CD4-positive, alpha-beta T cell (primary cell): ENCODE measurements at regions of chr2 and their contacts with region 1.

Region 1: GRCh38 chr2:24360050-24360962 is at the start of gene ITSN2:
- DNase-seq: peak; percentile 65 to 94 (median 75)
- ATAC-seq: peak; percentile 81
- H3K4me3 ChIP-seq: peak within 1 kb of the TSS; percentile 83
- H3K4me3 Mint-ChIP-seq: peak within 1 kb of the TSS; percentile 99
- H3K27ac ChIP-seq: peak within 1 kb of the TSS; percentile 83 to 93
- H3K27ac Mint-ChIP-seq: peak within 1 kb of the TSS; percentile 97
- H3K4me1 ChIP-seq: peaks cover 13% of the 10 kb centered on the region
- H3K4me1 Mint-ChIP-seq: peaks cover 40% of the 10 kb centered on the region
- H3K27me3 ChIP-seq: no peaks in the 10 kb centered on the region
- H3K27me3 Mint-ChIP-seq: no peaks in the 10 kb centered on the region
- CTCF ChIP-seq: no peak
- total RNA-seq, gene ITSN2: 75.4 to 77.1 TPM

Region 2: GRCh38 chr2:23939987-23940717 is 420.2 kb before region 1 on chr2 and contains the start of gene UBXN2A:
- CTCF ChIA-PET with region 1: no interaction called
- POLR2A ChIA-PET with region 1: no interaction called
- intact Hi-C with region 1: loop called in 1 of 2 experiments (anchors 5 kb)
- DNase-seq: peak; percentile 54 to 93 (median 66)
- ATAC-seq: peak; percentile 86
- H3K4me3 ChIP-seq: peak within 1 kb of the TSS; percentile 88
- H3K4me3 Mint-ChIP-seq: peak within 1 kb of the TSS; percentile 94
- H3K27ac ChIP-seq: peak within 1 kb of the TSS in 1 of 2 donors; percentile 15
- H3K27ac Mint-ChIP-seq: peak within 1 kb of the TSS; percentile 76
- H3K4me1 ChIP-seq: peaks cover 19% of the 10 kb centered on the region
- H3K4me1 Mint-ChIP-seq: peaks cover 30% of the 10 kb centered on the region
- H3K27me3 ChIP-seq: no peaks in the 10 kb centered on the region
- H3K27me3 Mint-ChIP-seq: no peaks in the 10 kb centered on the region
- CTCF ChIP-seq: no peak
- total RNA-seq, gene UBXN2A: 12.9 to 16.7 TPM

Region 3: DNA sequence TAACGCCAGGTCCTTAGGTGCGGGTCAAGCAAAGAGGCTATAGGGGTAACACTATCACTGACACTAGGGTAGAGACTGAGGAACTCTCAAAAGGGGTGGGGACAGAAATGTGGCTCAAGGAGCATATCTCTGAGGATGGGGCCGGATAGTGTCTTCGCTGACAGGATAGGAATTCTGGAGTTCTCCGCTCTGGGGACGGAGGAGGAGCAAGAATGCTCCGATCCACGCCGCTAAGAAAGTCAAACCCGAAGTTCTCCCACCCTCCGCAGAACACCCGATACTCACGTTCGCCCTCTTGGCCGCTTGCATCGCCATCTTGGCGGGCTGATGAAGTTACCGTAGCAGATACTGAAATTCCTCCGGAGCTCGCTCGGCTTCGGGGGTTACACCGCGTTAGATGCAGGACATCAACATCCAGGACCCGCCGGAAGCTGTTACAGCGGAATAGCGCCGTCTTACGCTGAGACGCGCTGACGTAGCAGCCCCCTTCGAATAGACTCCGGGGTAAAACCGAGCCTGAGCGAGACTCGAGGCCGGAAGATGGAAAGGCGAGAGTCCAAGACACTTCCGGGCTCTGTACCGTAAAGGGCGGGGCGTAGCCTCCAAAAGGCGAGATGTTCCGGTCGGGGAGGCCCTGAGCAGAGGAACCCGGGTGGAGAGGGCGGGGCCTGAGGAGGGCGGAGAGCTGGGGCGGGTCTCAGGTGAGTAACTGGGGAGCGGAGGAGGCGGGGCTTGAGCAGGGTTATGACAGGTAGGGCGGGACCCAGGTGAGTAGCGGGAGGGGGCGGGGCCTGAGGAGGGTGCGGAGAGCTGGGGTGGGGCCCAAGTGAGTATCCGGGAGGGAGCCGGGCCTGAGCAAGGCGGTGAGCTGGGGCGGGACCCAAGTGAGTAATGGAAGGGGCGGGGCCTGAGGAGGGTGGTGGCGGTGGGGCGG is 284.1 kb before region 1 on chr2 and contains the start of gene SF3B6:
- CTCF ChIA-PET with region 1: no interaction called
- POLR2A ChIA-PET with region 1: interaction called, 17 read pairs
- intact Hi-C with region 1: loop called in 1 of 2 experiments (anchors 5 kb)
- DNase-seq: peak; percentile 98 to 100 (median 100)
- ATAC-seq: peak; percentile 81
- H3K4me3 ChIP-seq: peak within 1 kb of the TSS; percentile 93
- H3K4me3 Mint-ChIP-seq: peak within 1 kb of the TSS; percentile 97
- H3K27ac ChIP-seq: peak within 1 kb of the TSS; percentile 86 to 95
- H3K27ac Mint-ChIP-seq: peak within 1 kb of the TSS; percentile 98
- H3K4me1 ChIP-seq: peaks cover 27% of the 10 kb centered on the region
- H3K4me1 Mint-ChIP-seq: peaks cover 41% of the 10 kb centered on the region
- H3K27me3 ChIP-seq: no peaks in the 10 kb centered on the region
- H3K27me3 Mint-ChIP-seq: no peaks in the 10 kb centered on the region
- CTCF ChIP-seq: no peak
- total RNA-seq, gene SF3B6: 59.8 to 62.6 TPM

Region 4: DNA sequence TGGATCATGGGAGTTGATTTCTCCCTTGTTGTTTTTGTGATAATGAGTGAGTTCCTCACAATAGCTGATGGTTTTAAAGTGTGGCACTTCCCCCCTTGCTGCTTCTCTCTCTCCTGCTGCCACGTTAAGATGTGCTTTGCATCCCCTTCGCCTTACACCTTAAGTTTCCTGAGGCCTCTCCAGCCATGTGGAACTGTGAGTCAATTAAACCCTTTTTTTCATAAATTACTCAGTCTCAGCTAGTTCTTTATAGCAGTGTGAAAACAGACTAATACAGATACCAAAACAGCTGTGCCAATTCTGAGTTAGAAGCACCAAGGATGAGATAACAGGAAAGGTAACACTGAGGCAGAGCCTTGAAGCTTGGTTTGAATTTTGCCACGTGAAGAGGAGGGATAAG is 44.6 kb before region 1 on chr2:
- CTCF ChIA-PET with region 1: no interaction called
- POLR2A ChIA-PET with region 1: no interaction called
- intact Hi-C with region 1: loop called (anchors 5 kb)
- DNase-seq: no peak
- ATAC-seq: no peak
- H3K4me3 ChIP-seq: no peak overlapping the region
- H3K4me3 Mint-ChIP-seq: no peak overlapping the region
- H3K27ac ChIP-seq: no peak overlapping the region
- H3K27ac Mint-ChIP-seq: no peak overlapping the region
- H3K4me1 ChIP-seq: peaks cover 8% of the 10 kb centered on the region
- H3K4me1 Mint-ChIP-seq: peaks cover 31% of the 10 kb centered on the region
- H3K27me3 ChIP-seq: no peaks in the 10 kb centered on the region
- H3K27me3 Mint-ChIP-seq: no peaks in the 10 kb centered on the region
- CTCF ChIP-seq: no peak

Region 5: DNA sequence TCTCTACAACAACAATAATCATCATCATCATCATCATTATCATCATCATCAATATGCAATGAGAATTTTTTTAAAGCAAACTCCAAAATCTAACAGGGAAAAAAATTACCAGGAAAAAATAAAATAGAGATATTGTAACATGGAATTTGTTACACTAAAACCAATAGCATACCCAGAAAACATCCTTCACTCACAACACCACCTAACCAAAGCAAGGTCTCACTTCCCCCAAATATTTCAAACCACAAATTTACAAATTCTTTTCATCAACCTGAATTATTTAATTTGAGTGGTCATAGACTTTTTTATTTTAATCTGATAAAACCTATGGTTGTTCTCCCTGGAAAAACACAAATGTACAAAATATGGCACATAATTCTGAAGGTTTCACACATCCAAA is 11.2 kb before region 1 on chr2:
- CTCF ChIA-PET with region 1: interaction called, 3 read pairs
- POLR2A ChIA-PET with region 1: interaction called, 12 read pairs
- intact Hi-C with region 1: no loop called
- DNase-seq: no peak
- ATAC-seq: no peak
- H3K4me3 ChIP-seq: no peak overlapping the region
- H3K4me3 Mint-ChIP-seq: no peak overlapping the region
- H3K27ac ChIP-seq: no peak overlapping the region
- H3K27ac Mint-ChIP-seq: no peak overlapping the region
- H3K4me1 ChIP-seq: peaks cover 15% of the 10 kb centered on the region
- H3K4me1 Mint-ChIP-seq: peaks cover 74% of the 10 kb centered on the region
- H3K27me3 ChIP-seq: no peaks in the 10 kb centered on the region
- H3K27me3 Mint-ChIP-seq: no peaks in the 10 kb centered on the region
- CTCF ChIP-seq: no peak

Region 6: GRCh38 chr2:24382363-24383073 is 22.2 kb after region 1 on chr2:
- CTCF ChIA-PET with region 1: no interaction called
- POLR2A ChIA-PET with region 1: no interaction called
- intact Hi-C with region 1: no loop called
- DNase-seq: peak; percentile 32 to 83 (median 50)
- ATAC-seq: peak; percentile 94
- H3K4me3 ChIP-seq: no peak overlapping the region
- H3K4me3 Mint-ChIP-seq: no peak overlapping the region
- H3K27ac ChIP-seq: no peak overlapping the region
- H3K27ac Mint-ChIP-seq: no peak overlapping the region
- H3K4me1 ChIP-seq: no peaks in the 10 kb centered on the region
- H3K4me1 Mint-ChIP-seq: no peaks in the 10 kb centered on the region
- H3K27me3 ChIP-seq: no peaks in the 10 kb centered on the region
- H3K27me3 Mint-ChIP-seq: no peaks in the 10 kb centered on the region
- CTCF ChIP-seq: peak; percentile 86

Region 7: GRCh38 chr2:24490674-24491625 is 130.6 kb after region 1 on chr2 and contains the start of gene NCOA1:
- CTCF ChIA-PET with region 1: no interaction called
- POLR2A ChIA-PET with region 1: interaction called, 16 read pairs
- intact Hi-C with region 1: no loop called
- DNase-seq: peak; percentile 83 to 95 (median 88)
- ATAC-seq: peak; percentile 85
- H3K4me3 ChIP-seq: peak within 1 kb of the TSS; percentile 60
- H3K4me3 Mint-ChIP-seq: peak within 1 kb of the TSS; percentile 92
- H3K27ac ChIP-seq: peak within 1 kb of the TSS; percentile 76 to 81
- H3K27ac Mint-ChIP-seq: peak within 1 kb of the TSS; percentile 94
- H3K4me1 ChIP-seq: peaks cover 34% of the 10 kb centered on the region
- H3K4me1 Mint-ChIP-seq: peaks cover 66% of the 10 kb centered on the region
- H3K27me3 ChIP-seq: no peaks in the 10 kb centered on the region
- H3K27me3 Mint-ChIP-seq: no peaks in the 10 kb centered on the region
- CTCF ChIP-seq: no peak
- total RNA-seq, gene NCOA1: 35.5 to 40.6 TPM

Region 8: GRCh38 chr2:24568551-24568950 is 208.2 kb after region 1 on chr2:
- CTCF ChIA-PET with region 1: no interaction called
- POLR2A ChIA-PET with region 1: no interaction called
- intact Hi-C with region 1: no loop called
- DNase-seq: no peak
- ATAC-seq: no peak
- H3K4me3 ChIP-seq: no peak overlapping the region
- H3K4me3 Mint-ChIP-seq: no peak overlapping the region
- H3K27ac ChIP-seq: no peak overlapping the region
- H3K27ac Mint-ChIP-seq: peak overlapping the region; percentile 52
- H3K4me1 ChIP-seq: peaks cover 5% of the 10 kb centered on the region
- H3K4me1 Mint-ChIP-seq: peaks cover 55% of the 10 kb centered on the region
- H3K27me3 ChIP-seq: no peaks in the 10 kb centered on the region
- H3K27me3 Mint-ChIP-seq: no peaks in the 10 kb centered on the region
- CTCF ChIP-seq: no peak